CD4-positive, alpha-beta T cell (primary cell): ENCODE measurements at regions of chr12 and their contacts with region 1.

Region 1: GRCh38 chr12:62621101-62621638 is 154.5 kb downstream of the MON2 start:
- DNase-seq: no peak
- ATAC-seq: no peak
- H3K4me3 ChIP-seq: no peak overlapping the region
- H3K4me3 Mint-ChIP-seq: no peak overlapping the region
- H3K27ac ChIP-seq: no peak overlapping the region
- H3K27ac Mint-ChIP-seq: no peak overlapping the region
- H3K4me1 ChIP-seq: no peaks in the 10 kb centered on the region
- H3K4me1 Mint-ChIP-seq: no peaks in the 10 kb centered on the region
- H3K27me3 ChIP-seq: peaks cover 0 to 5% of the 10 kb centered on the region in 2 experiments
- H3K27me3 Mint-ChIP-seq: peaks cover 9% of the 10 kb centered on the region
- CTCF ChIP-seq: no peak

Region 2: GRCh38 chr12:62588916-62589315 is 32.3 kb before region 1 on chr12:
- CTCF ChIA-PET with region 1: no interaction called
- POLR2A ChIA-PET with region 1: no interaction called
- intact Hi-C with region 1: loop called in 1 of 2 experiments (anchors 5 kb)
- DNase-seq: no peak
- ATAC-seq: no peak
- H3K4me3 ChIP-seq: no peak overlapping the region
- H3K4me3 Mint-ChIP-seq: no peak overlapping the region
- H3K27ac ChIP-seq: no peak overlapping the region
- H3K27ac Mint-ChIP-seq: no peak overlapping the region
- H3K4me1 ChIP-seq: no peaks in the 10 kb centered on the region
- H3K4me1 Mint-ChIP-seq: no peaks in the 10 kb centered on the region
- H3K27me3 ChIP-seq: no peaks in the 10 kb centered on the region
- H3K27me3 Mint-ChIP-seq: no peaks in the 10 kb centered on the region
- CTCF ChIP-seq: no peak